ENCODE measurements at regions of chr1 and their contacts with region 1.

Region 1: GRCh38 chr1:45913183-45913683 is 109.8 kb downstream of the MAST2 start:
- DNase-seq: peak; percentile 42 to 87
- H3K4me3 ChIP-seq: peak overlapping the region in 1 of 2 donors; percentile 37
- H3K27ac ChIP-seq: peak overlapping the region; percentile 83 to 87
- H3K4me1 ChIP-seq: peaks cover 2 to 7% of the 10 kb centered on the region in 2 donors
- H3K27me3 ChIP-seq: no peaks in the 10 kb centered on the region
- CTCF ChIP-seq: no peak

Region 2: DNA sequence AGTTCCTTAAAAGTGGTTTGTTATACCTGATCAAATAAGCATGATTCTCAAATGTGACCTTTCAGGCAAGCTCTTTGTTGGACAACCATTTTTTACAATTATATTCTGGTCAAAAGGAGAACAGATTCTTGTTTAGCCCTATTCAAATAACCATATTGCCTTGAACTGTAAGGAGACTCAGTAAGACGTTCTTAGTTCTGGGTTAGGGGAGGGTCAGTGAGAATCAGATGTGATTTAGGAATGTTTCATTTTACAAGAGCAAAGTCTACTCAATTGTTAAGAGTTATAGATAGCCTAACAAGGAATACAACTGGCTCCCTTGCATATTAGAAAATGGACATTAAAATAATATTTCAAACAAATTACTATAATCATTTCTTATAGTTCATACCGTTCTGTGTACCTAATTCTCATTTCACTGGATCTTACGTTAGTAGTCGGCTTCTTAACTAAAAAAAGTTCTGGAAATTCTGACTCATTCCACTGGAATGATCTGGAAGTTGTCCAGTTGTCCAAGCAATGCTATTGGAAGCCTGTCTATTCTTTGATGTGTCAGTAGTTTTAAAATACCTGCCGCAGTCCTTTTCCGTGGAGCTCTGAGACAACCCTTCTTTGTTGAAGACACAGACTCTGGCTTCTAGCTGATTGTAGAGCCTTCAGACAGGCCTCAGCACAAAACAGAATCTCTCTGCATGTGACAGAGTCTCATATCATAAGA is 21.0 kb before region 1 on chr1:
- intact Hi-C with region 1: loop called (anchors 2 kb)
- DNase-seq: no peak
- H3K4me3 ChIP-seq: peak overlapping the region in 1 of 2 donors; percentile 3
- H3K27ac ChIP-seq: peak overlapping the region; percentile 51 to 55
- H3K4me1 ChIP-seq: peaks cover 0 to 13% of the 10 kb centered on the region in 2 donors
- H3K27me3 ChIP-seq: no peaks in the 10 kb centered on the region
- CTCF ChIP-seq: no peak

Measured in ascending aorta (tissue), 2 donors.